ENCODE measurements at regions of chr15 and their contacts with region 1.

Region 1: DNA sequence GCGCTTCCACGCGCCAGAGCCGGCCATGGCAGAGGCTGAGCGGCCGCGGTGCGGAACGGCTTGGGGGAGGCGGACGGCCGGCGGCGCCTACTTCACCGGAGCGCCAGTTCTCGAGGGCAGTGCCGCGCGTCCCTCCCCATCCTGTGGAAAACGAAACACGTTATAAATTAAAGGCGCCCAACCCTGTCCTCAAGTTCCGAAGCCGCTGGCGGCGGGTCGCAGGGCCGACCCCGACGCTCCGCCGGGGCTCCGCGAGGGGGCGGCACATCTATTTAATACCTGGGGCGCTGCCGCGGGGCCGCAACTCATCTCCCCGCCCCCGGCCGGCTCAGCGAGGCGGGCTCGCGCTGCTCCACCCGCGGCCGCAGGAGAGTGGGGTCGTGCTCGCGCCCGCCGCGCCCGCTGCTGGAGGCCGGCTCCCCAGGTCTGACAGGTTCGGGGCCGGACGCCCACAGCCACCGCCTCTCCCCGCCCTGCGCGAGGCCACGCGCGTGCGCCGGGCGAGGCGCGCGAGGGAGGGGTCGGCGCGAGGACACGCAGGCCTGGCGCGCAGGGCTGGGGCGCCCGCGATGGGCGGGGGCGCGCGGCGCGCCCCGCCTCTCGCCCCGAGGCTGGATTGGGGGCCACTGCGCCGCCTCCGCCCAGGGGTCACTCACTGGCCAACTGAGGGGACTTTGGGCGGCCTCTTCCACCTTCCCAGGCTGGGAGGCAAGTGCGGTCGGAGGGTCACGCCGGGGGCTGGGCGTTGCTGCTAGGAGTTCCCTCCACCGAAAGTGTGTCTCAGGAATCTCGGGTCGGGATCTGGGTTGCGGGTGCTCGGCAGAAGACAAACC is at the start of gene SLC30A4:
- DNase-seq: peak; percentile 16 to 87 (median 66)
- ATAC-seq: peak; percentile 85
- H3K4me3 ChIP-seq: peak within 1 kb of the TSS; percentile 71 to 85
- H3K4me3 Mint-ChIP-seq: peak within 1 kb of the TSS; percentile 94
- H3K27ac ChIP-seq: peak within 1 kb of the TSS; percentile 31 to 63
- H3K27ac Mint-ChIP-seq: peak within 1 kb of the TSS; percentile 88
- H3K4me1 ChIP-seq: peaks cover 10% of the 10 kb centered on the region
- H3K4me1 Mint-ChIP-seq: peaks cover 32% of the 10 kb centered on the region
- H3K27me3 ChIP-seq: no peaks in the 10 kb centered on the region
- H3K27me3 Mint-ChIP-seq: no peaks in the 10 kb centered on the region
- CTCF ChIP-seq: peak; percentile 67
- total RNA-seq, gene SLC30A4: 1.8 to 2.0 TPM

Region 2: GRCh38 chr15:44782516-44782915 is 740.0 kb before region 1 on chr15:
- CTCF ChIA-PET with region 1: no interaction called
- POLR2A ChIA-PET with region 1: no interaction called
- intact Hi-C with region 1: no loop called
- DNase-seq: no peak
- ATAC-seq: no peak
- H3K4me3 ChIP-seq: no peak overlapping the region
- H3K4me3 Mint-ChIP-seq: no peak overlapping the region
- H3K27ac ChIP-seq: no peak overlapping the region
- H3K27ac Mint-ChIP-seq: no peak overlapping the region
- H3K4me1 ChIP-seq: peaks cover 4% of the 10 kb centered on the region
- H3K4me1 Mint-ChIP-seq: peaks cover 9% of the 10 kb centered on the region
- H3K27me3 ChIP-seq: no peaks in the 10 kb centered on the region
- H3K27me3 Mint-ChIP-seq: no peaks in the 10 kb centered on the region
- CTCF ChIP-seq: no peak

Region 3: DNA sequence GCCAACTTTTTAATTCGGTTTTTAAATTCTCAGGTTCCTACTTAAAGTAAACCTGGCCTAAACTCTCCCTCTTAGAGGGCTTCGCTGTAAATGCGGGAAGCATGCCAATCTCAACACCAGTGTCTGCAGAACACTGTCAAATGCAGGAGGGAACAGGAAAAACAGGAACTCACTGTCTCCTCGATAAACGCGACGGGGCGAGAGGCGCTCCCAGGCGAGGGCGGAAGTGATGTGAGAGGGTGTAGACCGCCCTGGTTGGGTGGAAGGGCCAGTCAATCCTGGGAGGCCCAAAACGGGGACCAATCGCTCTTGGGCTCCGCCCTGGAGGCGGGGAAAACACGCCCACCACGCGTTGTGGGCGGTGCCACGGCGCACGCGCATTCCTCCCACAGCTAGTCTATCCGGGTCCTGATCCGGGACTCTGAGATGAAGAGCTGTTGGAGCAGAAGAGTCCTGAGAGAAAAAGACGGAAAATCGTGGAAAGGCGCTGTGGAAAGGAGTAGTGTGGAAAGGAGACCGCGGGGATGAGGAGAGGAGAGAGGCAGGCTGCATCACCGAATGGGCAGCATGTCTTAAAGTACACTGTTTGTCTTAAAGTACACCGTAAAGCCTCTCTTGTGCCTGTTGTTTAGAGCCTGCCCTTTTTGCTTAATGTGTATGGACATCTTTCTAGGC is 243.4 kb before region 1 on chr15:
- CTCF ChIA-PET with region 1: no interaction called
- POLR2A ChIA-PET with region 1: no interaction called
- intact Hi-C with region 1: loop called in 1 of 2 experiments (anchors 5 kb)
- DNase-seq: peak; percentile 95 to 99 (median 97)
- ATAC-seq: peak; percentile 99
- H3K4me3 ChIP-seq: peak overlapping the region; percentile 61 to 69
- H3K4me3 Mint-ChIP-seq: peak overlapping the region; percentile 91
- H3K27ac ChIP-seq: peak overlapping the region; percentile 66 to 85
- H3K27ac Mint-ChIP-seq: peak overlapping the region; percentile 94
- H3K4me1 ChIP-seq: peaks cover 15% of the 10 kb centered on the region
- H3K4me1 Mint-ChIP-seq: peaks cover 22% of the 10 kb centered on the region
- H3K27me3 ChIP-seq: no peaks in the 10 kb centered on the region
- H3K27me3 Mint-ChIP-seq: peaks cover 1% of the 10 kb centered on the region
- CTCF ChIP-seq: no peak

Region 4: DNA sequence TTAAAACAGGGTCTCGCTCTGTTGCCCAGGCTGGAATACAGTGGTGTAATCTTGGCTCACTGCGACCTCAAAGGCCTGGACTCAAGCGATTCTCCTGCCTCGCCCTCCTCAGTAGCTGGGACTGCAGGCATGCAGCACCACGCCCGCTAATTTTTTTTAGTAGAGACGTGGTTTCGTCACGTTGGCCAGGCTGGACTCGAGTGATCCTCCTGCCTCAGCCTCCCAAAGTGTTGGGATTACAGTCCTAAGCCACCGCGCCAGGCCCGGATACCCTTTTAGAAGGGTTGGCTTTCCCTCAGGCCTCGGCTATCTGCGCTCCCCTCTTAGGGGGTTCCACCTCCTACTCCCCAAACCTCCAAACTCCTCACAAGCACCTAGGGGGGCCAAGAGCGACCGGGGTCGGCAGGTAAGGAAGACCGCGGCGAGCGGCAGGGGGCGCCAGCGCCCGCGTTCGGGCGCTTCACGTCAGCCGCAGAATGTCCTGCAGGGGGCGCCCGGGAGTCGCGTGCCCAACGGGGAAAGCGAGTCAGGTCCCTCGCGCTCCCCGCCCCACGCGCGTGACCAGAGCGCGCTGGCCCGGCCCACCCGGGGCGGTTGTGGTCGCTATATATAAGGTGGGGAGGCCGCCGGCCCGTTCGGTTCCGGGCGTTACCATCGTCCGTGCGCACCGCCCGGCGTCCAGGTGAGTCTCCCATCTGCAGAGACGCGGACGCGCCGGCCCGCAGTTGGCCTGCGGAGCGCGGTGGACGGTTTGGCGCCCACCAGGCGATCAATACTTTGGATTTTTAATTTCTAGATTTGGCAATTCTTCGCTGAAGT is 92.4 kb before region 1 on chr15:
- CTCF ChIA-PET with region 1: interaction called, 3 read pairs
- POLR2A ChIA-PET with region 1: no interaction called
- intact Hi-C with region 1: loop called in 1 of 2 experiments (anchors 1 kb)
- DNase-seq: peak; percentile 72 to 93 (median 87)
- ATAC-seq: peak; percentile 95
- H3K4me3 ChIP-seq: peak overlapping the region; percentile 43 to 45
- H3K4me3 Mint-ChIP-seq: peak overlapping the region; percentile 61
- H3K27ac ChIP-seq: no peak overlapping the region
- H3K27ac Mint-ChIP-seq: no peak overlapping the region
- H3K4me1 ChIP-seq: peaks cover 7% of the 10 kb centered on the region
- H3K4me1 Mint-ChIP-seq: peaks cover 3% of the 10 kb centered on the region
- H3K27me3 ChIP-seq: peaks cover 0 to 2% of the 10 kb centered on the region in 2 experiments
- H3K27me3 Mint-ChIP-seq: no peaks in the 10 kb centered on the region
- CTCF ChIP-seq: peak; percentile 100

Region 5: DNA sequence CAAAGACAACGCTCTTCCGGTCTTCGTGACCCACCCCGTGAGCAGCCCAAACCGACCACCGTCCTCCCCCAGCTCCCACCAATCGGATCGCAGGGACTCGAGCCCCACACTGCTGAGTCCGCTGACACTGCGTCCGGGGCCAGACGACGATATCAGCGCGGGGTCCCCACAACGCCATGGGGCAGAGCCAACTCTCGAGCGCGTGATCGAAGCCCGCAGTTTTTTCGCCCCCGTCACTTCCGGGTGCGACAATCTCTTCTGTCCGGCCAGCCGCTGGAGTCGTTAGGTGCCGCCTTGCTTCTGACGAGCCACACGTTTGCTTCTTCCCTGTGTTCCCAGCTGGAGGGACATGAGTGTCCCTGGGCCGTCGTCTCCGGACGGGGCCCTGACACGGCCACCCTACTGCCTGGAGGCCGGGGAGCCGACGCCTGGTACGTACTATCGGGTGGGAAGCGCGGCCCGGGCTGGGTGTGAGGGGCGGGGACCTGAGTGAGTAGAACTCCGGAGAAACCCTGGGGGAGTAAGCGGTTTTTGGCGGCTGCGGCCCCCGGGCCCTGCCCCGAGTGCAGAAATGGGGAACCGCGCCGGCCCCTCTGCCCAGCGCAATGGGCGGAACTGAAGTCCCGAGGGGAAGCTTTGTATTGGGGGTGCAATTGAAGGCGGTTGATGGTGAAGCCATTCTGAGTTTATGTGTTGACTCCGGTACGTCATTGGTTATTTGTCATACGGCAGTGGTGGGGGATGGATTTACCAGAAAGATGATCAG is 64.7 kb after region 1 on chr15 and contains the start of gene BLOC1S6:
- CTCF ChIA-PET with region 1: no interaction called
- POLR2A ChIA-PET with region 1: interaction called, 8 read pairs
- intact Hi-C with region 1: loop called (anchors 1 to 2 kb)
- DNase-seq: peak; percentile 83 to 95 (median 90)
- ATAC-seq: peak; percentile 77
- H3K4me3 ChIP-seq: peak within 1 kb of the TSS; percentile 82 to 86
- H3K4me3 Mint-ChIP-seq: peak within 1 kb of the TSS; percentile 100
- H3K27ac ChIP-seq: peak within 1 kb of the TSS; percentile 93 to 98
- H3K27ac Mint-ChIP-seq: peak within 1 kb of the TSS; percentile 100
- H3K4me1 ChIP-seq: peaks cover 32% of the 10 kb centered on the region
- H3K4me1 Mint-ChIP-seq: peaks cover 50% of the 10 kb centered on the region
- H3K27me3 ChIP-seq: no peaks in the 10 kb centered on the region
- H3K27me3 Mint-ChIP-seq: no peaks in the 10 kb centered on the region
- CTCF ChIP-seq: no peak
- total RNA-seq, gene BLOC1S6: 78.1 to 78.9 TPM

Region 6: DNA sequence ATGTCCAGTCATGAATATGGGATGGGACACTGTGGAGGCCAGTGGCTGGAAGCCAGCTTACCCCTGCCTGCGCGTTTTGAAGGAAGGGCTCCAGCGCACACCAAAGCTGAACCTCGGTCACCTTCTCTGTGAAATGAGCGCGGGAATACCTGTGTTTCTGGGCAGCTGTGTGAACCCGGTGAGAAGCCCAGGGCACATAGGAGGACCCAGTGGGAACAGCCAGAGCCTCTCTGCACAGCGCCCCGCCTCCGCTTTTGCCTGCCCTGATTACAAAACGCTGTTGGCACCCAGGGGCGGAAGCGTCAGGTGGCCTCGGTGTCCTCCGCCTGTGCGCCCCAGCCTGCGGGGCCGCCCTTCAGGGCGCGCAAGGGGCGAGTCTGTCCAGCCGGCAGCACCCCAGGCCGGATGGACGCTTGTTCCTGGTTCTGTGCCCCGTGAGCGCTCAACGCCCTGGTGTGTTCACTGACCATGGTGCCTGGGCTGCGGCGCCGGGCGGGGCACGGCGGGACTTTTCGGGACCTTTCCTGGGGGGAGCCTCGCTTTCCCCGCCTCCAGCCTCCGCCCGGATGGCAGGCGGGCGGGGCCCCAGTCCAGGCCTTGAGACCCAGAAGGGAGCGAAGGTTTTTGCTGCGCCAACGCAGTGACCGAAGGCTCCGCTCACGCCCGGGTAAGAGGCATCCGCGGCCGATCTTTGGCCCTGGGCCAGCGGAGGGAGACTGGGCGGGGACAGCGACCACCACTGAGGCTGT is 112.1 kb after region 1 on chr15 and contains the start of gene SQOR:
- CTCF ChIA-PET with region 1: no interaction called
- POLR2A ChIA-PET with region 1: no interaction called
- intact Hi-C with region 1: loop called in 1 of 2 experiments (anchors 2 kb)
- DNase-seq: peak; percentile 25 to 83 (median 67)
- ATAC-seq: peak; percentile 57
- H3K4me3 ChIP-seq: peak within 1 kb of the TSS; percentile 67 to 96
- H3K4me3 Mint-ChIP-seq: peak within 1 kb of the TSS; percentile 97
- H3K27ac ChIP-seq: peak within 1 kb of the TSS; percentile 72 to 78
- H3K27ac Mint-ChIP-seq: peak within 1 kb of the TSS; percentile 94
- H3K4me1 ChIP-seq: peaks cover 34% of the 10 kb centered on the region
- H3K4me1 Mint-ChIP-seq: peaks cover 43% of the 10 kb centered on the region
- H3K27me3 ChIP-seq: no peaks in the 10 kb centered on the region
- H3K27me3 Mint-ChIP-seq: no peaks in the 10 kb centered on the region
- CTCF ChIP-seq: no peak
- total RNA-seq, gene SQOR: 11.8 to 14.4 TPM

Region 7: DNA sequence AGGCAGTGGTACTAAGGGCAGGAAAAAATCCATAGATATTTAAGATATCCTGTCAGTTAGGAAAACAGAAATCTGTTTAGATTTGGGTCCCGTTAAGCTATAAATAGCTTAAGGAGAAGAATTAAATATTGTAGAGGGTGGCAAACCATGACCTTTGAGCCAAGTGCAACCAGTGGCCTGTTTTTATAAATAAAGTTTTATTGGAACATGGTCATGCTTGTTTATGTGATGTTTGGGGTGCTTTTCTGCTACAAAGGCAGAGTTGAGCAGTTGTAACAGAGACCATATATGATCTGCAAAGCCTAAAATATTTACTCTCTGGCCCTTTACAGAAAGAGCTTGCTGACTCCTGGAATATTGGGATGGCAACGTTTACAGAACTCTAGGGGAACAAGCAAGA is 178.6 kb after region 1 on chr15:
- CTCF ChIA-PET with region 1: no interaction called
- POLR2A ChIA-PET with region 1: no interaction called
- intact Hi-C with region 1: no loop called
- DNase-seq: no peak
- ATAC-seq: no peak
- H3K4me3 ChIP-seq: no peak overlapping the region
- H3K4me3 Mint-ChIP-seq: no peak overlapping the region
- H3K27ac ChIP-seq: no peak overlapping the region
- H3K27ac Mint-ChIP-seq: no peak overlapping the region
- H3K4me1 ChIP-seq: peaks cover 7% of the 10 kb centered on the region
- H3K4me1 Mint-ChIP-seq: peaks cover 11% of the 10 kb centered on the region
- H3K27me3 ChIP-seq: peaks cover 0 to 6% of the 10 kb centered on the region in 2 experiments
- H3K27me3 Mint-ChIP-seq: no peaks in the 10 kb centered on the region
- CTCF ChIP-seq: no peak

Measured in CD8-positive, alpha-beta T cell (primary cell).